A673 (cell line): ENCODE measurements at regions of chr11 and their contacts with region 1.

Region 1: DNA sequence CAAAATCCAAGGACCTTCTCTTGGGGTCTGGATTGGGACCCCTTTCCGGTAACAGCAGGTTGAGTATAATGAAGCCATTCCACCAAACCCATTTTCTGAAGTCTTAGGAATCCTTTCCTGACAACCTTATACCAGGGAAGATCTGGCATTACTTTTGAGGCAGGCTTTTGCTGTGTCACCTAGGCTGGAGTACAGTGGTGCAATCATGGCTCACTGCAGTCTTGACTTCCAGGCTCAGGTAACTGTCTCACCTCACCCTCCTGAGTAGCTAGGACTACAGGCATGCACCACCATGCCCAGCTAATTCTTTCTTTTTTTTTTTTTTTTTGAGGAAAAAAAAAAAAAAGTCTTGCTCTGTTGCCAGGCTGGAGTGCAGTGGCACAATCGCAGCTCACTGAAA is 55.8 kb upstream of the TREH start:
- DNase-seq: no peak
- H3K4me3 ChIP-seq: no peak overlapping the region
- H3K27ac ChIP-seq: no peak overlapping the region
- H3K4me1 ChIP-seq: peaks cover 5% of the 10 kb centered on the region
- H3K27me3 ChIP-seq: no peaks in the 10 kb centered on the region
- CTCF ChIP-seq: no peak

Region 2: DNA sequence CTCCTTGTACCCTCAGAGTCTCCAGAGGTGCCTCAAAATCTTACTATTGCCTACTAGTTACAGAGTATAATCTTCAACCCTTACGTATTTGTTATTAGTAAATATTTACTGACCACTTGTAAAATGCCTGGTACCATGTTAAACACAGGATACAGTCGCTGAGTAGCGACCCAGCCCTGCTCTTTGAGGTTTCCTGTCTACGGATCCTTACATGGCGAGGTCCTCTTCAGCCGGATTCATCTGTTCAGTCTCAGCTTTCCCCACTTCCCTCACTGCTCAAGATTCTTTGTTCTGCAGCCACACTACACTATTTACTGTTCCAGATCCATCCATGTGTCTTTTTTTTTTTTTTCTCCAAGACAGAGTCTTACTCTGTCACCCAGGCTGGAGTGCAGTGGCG is 221.1 kb before region 1 on chr11:
- CTCF ChIA-PET with region 1: no interaction called
- POLR2A ChIA-PET with region 1: no interaction called
- intact Hi-C with region 1: no loop called
- DNase-seq: no peak
- H3K4me3 ChIP-seq: no peak overlapping the region
- H3K27ac ChIP-seq: no peak overlapping the region
- H3K4me1 ChIP-seq: no peaks in the 10 kb centered on the region
- H3K27me3 ChIP-seq: no peaks in the 10 kb centered on the region
- CTCF ChIP-seq: no peak

Region 3: DNA sequence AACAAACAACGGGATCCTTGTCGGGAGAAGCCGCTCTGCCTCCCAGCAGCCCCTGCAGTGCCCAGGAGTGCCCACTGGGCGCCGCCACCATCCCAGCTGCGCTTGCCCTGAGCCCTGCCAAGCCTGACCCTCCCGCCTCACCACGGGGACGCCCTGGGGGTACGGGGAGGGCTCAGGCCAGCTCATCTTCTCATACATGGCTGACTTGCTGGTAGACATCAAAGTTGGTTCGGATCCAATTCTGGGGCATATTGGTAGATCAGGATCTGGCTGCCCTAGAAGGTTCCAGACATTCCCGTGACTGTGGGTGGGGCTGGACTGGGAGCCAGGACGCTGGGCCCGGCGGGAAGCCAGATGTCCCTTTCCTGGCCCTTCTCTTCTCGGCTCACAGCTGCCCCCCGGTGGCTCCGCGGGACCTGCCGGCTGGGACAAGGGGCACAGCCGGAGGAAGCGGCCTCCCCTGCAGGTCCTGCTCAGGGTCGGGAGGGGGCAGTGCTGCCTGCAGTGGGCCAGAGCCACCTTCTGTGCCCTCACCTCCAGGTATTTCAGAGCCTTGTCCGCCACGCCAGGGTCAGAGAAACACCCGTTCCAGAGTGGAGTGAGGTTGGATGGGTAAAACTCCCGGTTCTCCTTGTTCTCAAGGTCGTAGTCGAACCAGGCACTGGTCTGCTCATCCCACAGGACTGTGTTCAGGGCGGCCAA is 45.2 kb before region 1 on chr11:
- CTCF ChIA-PET with region 1: interaction called, 12 read pairs
- POLR2A ChIA-PET with region 1: no interaction called
- intact Hi-C with region 1: no loop called
- DNase-seq: peak; percentile 96
- H3K4me3 ChIP-seq: peak overlapping the region; percentile 41
- H3K27ac ChIP-seq: peak overlapping the region; percentile 69
- H3K4me1 ChIP-seq: peaks cover 4% of the 10 kb centered on the region
- H3K27me3 ChIP-seq: no peaks in the 10 kb centered on the region
- CTCF ChIP-seq: peak; percentile 96

Region 4: GRCh38 chr11:118705111-118705741 is 30.0 kb before region 1 on chr11:
- CTCF ChIA-PET with region 1: no interaction called
- POLR2A ChIA-PET with region 1: interaction called, 13 read pairs
- intact Hi-C with region 1: no loop called
- DNase-seq: no peak
- H3K4me3 ChIP-seq: no peak overlapping the region
- H3K27ac ChIP-seq: no peak overlapping the region
- H3K4me1 ChIP-seq: peaks cover 10% of the 10 kb centered on the region
- H3K27me3 ChIP-seq: no peaks in the 10 kb centered on the region
- CTCF ChIP-seq: no peak

Region 5: GRCh38 chr11:119168471-119169281 is 433.5 kb after region 1 on chr11 and contains the start of gene NLRX1:
- CTCF ChIA-PET with region 1: interaction called, 10 read pairs
- POLR2A ChIA-PET with region 1: no interaction called
- intact Hi-C with region 1: no loop called
- DNase-seq: peak; percentile 86
- H3K4me3 ChIP-seq: peak within 1 kb of the TSS; percentile 57
- H3K27ac ChIP-seq: peak within 1 kb of the TSS; percentile 43
- H3K4me1 ChIP-seq: no peaks in the 10 kb centered on the region
- H3K27me3 ChIP-seq: no peaks in the 10 kb centered on the region
- CTCF ChIP-seq: peak; percentile 83
- total RNA-seq, gene NLRX1: 1.4 and 2.7 TPM in 2 replicates